Activated CD8-positive, alpha-beta memory T cell treated with anti-CD3 and anti-CD28 coated beads, Interleukin-2, amount 10 ng/mL, durations not matched to agents 7 days and 5 days (primary cell): ENCODE measurements at regions of chr9 and their contacts with region 1.

Region 1: DNA sequence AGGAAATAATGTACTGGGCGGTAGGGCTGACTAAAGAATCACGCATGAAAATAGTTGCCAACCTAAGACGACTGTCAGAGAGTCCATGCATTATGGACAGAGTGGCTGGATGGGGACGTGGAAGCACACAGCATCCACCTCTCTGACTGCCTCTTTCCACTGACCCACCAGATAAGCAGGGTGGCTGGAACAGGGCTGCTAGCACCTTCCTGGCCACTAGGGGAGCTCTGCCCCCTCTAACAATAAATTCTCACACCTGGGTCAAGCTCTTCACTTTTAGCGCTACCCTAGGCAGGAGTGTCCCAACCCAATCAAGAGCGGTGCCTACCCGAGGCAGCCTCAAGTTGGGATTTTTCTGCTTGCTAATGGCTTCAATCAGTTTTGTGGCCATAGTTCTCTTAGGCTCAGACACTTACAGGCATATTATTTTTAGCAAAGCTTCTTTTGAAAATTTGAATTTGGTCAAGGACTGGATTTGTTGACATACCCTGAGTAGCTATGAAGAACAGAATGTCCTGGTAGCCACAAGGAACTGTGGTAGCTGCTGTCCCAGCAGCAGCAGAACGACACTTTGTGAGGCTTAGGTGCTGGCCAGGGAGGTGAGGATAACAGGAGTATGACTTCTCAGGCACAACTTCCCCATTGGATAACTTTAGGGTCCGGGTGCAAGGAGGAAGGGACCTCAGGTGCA is 6.9 kb upstream of the TPM2 start:
- DNase-seq: peak; percentile 72
- ATAC-seq: peak; percentile 92
- H3K4me3 Mint-ChIP-seq: no peak overlapping the region
- H3K27ac Mint-ChIP-seq: no peak overlapping the region
- H3K4me1 Mint-ChIP-seq: peaks cover 2% of the 10 kb centered on the region
- H3K27me3 Mint-ChIP-seq: no peaks in the 10 kb centered on the region

Region 2: GRCh38 chr9:35611230-35611797 is 85.4 kb before region 1 on chr9:
- CTCF ChIA-PET with region 1: interaction called, 28 read pairs
- DNase-seq: peak; percentile 73
- ATAC-seq: peak; percentile 87
- H3K4me3 Mint-ChIP-seq: no peak overlapping the region
- H3K27ac Mint-ChIP-seq: no peak overlapping the region
- H3K4me1 Mint-ChIP-seq: peaks cover 16% of the 10 kb centered on the region
- H3K27me3 Mint-ChIP-seq: no peaks in the 10 kb centered on the region

Region 3: GRCh38 chr9:35636135-35636876 is 60.4 kb before region 1 on chr9:
- CTCF ChIA-PET with region 1: interaction called, 10 read pairs
- DNase-seq: no peak
- ATAC-seq: no peak
- H3K4me3 Mint-ChIP-seq: no peak overlapping the region
- H3K27ac Mint-ChIP-seq: no peak overlapping the region
- H3K4me1 Mint-ChIP-seq: peaks cover 48% of the 10 kb centered on the region
- H3K27me3 Mint-ChIP-seq: no peaks in the 10 kb centered on the region

Region 4: DNA sequence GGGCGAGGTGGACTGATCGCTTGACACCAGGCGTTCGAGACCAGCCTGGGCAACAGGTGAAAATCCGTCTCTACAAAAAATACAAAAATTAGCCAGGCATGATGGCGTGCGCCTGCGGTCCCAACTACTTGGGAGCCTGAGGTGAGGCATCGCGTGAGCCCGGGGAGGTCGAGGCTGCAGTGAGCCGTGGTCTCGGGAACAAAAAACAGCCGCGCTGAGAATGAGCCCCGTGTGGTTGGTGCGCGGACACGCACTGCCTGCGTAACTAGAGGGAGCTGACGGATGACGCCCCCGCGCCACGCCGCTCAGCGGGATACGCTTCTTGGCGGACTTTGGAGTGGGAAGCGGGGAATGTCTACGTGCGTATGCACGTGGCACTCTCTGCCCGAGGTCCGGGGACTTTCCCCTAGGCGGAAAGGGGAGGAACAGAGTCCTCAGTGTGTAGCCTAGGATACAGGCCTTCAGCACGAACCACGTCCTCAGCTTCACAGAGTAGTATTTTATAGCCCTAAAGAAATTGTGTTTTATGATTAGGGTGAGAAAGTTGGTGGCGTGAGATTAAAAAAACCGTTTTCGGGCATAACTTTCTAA is 39.0 kb before region 1 on chr9 and contains the start of gene RMRP:
- CTCF ChIA-PET with region 1: interaction called, 58 read pairs
- DNase-seq: peak; percentile 95
- ATAC-seq: peak; percentile 92
- H3K4me3 Mint-ChIP-seq: peak within 1 kb of the TSS; percentile 84
- H3K27ac Mint-ChIP-seq: peak within 1 kb of the TSS; percentile 95
- H3K4me1 Mint-ChIP-seq: peaks cover 61% of the 10 kb centered on the region
- H3K27me3 Mint-ChIP-seq: peaks cover 4% of the 10 kb centered on the region
- total RNA-seq, gene RMRP: 6,751 to 13,083 TPM

Region 5: DNA sequence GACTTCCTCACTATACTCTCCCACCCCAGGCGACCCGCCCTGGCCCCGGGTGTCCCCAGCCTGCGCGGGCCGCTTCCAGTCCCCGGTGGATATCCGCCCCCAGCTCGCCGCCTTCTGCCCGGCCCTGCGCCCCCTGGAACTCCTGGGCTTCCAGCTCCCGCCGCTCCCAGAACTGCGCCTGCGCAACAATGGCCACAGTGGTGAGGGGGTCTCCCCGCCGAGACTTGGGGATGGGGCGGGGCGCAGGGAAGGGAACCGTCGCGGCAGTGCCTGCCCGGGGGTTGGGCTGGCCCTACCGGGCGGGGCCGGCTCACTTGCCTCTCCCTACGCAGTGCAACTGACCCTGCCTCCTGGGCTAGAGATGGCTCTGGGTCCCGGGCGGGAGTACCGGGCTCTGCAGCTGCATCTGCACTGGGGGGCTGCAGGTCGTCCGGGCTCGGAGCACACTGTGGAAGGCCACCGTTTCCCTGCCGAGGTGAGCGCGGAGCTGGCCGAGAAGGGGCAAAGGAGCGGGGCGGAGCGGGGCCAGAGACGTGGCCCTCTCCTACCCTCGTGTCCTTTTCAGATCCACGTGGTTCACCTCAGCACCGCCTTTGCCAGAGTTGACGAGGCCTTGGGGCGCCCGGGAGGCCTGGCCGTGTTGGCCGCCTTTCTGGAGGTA is 20.8 kb before region 1 on chr9:
- CTCF ChIA-PET with region 1: interaction called, 13 read pairs
- DNase-seq: peak; percentile 50
- ATAC-seq: peak; percentile 70
- H3K4me3 Mint-ChIP-seq: peak overlapping the region; percentile 43
- H3K27ac Mint-ChIP-seq: no peak overlapping the region
- H3K4me1 Mint-ChIP-seq: peaks cover 9% of the 10 kb centered on the region
- H3K27me3 Mint-ChIP-seq: peaks cover 27% of the 10 kb centered on the region

Region 6: DNA sequence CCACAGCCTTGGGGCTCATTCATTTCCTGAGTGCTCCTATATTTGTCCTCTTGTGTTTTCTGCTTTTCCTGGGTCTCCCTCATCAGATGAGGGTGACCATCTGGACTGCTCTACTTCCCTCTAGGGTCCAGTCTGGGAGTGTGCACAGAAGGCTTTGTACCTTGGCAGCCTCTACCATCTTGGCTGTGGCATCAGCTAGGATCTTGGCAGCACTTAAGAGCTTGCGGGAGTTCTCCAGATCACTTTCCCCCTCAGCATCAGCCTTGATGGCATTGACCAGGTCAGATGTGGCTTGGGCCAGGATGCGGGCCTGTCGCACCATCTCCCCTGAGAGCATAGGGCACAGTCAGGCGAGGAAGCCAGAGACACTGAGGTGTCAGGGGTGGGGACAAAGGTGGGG is 19.6 kb after region 1 on chr9:
- CTCF ChIA-PET with region 1: interaction called, 41 read pairs
- DNase-seq: no peak
- ATAC-seq: no peak
- H3K4me3 Mint-ChIP-seq: no peak overlapping the region
- H3K27ac Mint-ChIP-seq: no peak overlapping the region
- H3K4me1 Mint-ChIP-seq: no peaks in the 10 kb centered on the region
- H3K27me3 Mint-ChIP-seq: no peaks in the 10 kb centered on the region

Region 7: GRCh38 chr9:35748858-35749514 is 52.3 kb after region 1 on chr9 and contains the starts of genes GBA2 and RGP1:
- CTCF ChIA-PET with region 1: interaction called, 21 read pairs
- DNase-seq: peak; percentile 83
- ATAC-seq: peak; percentile 83
- H3K4me3 Mint-ChIP-seq: peak within 1 kb of the TSS; percentile 88
- H3K27ac Mint-ChIP-seq: peak within 1 kb of the TSS; percentile 86
- H3K4me1 Mint-ChIP-seq: peaks cover 41% of the 10 kb centered on the region
- H3K27me3 Mint-ChIP-seq: no peaks in the 10 kb centered on the region
- total RNA-seq, gene GBA2: 57.7 to 58.8 TPM
- total RNA-seq, gene RGP1: 21.0 to 23.6 TPM